Activated T-helper 2 cell treated with anti-CD3 and anti-CD28 coated beads, Interferon-gamma antibody, Interleukin-2, Interleukin-4, amounts not matched to agents 10 μg/mL and 5 μg/mL and 100 μg/mL, durations not matched to agents 14 hours and 24 hours and 36 hours (primary cell): ENCODE measurements at regions of chrX and their contacts with region 1.

Region 1: DNA sequence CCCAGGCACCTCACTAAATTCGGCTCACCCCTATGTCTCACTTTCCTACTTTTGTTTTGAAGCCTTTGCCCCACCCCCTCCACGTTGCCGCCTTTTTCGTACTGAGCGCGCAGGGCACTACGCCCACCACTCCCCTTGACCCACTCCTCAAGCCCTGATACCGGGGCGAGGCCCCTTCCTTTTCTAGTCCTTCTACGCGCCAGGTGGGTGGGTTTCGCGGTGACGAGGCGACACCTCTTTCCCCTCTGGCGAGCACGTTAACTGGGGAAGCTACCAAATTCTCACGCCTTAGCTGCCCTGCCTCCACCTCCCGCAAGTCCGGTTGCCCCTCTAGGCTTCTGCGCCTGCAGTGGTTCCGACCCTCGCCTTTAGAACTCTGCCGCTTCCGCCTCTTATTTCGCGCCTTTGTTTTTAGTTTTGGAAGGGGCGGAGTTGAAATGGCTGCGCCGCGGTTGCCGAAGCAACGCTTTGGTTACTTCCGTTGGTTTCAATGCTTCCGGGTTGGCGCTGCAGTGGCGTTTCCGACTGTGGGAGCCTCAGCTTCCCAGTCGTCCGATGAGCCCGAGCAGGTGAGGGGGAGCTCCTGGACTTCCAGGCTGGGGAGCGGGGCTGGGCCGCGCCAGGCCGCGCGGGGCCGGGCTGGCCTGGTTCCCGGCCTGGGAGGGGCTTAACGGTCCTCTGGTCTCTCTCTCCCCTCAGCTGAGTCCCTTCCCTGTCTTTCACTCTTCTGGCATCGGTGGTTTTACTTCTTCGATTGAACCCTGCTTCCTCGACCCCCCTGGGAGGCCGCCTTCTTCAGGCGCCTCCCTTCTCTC is at the start of gene SLC25A14:
- DNase-seq: peak; percentile 70
- H3K4me3 Mint-ChIP-seq: peak within 1 kb of the TSS; percentile 94
- H3K27ac Mint-ChIP-seq: peak within 1 kb of the TSS; percentile 96
- H3K4me1 Mint-ChIP-seq: peaks cover 18% of the 10 kb centered on the region
- H3K27me3 Mint-ChIP-seq: no peaks in the 10 kb centered on the region
- total RNA-seq, gene SLC25A14: 10.5 TPM in 2 replicates

Region 2: GRCh38 chrX:130211415-130212186 is 128.0 kb before region 1 on chrX:
- intact Hi-C with region 1: loop called (anchors 5 kb)
- DNase-seq: no peak
- H3K4me3 Mint-ChIP-seq: peak overlapping the region; percentile 62
- H3K27ac Mint-ChIP-seq: peak overlapping the region; percentile 90
- H3K4me1 Mint-ChIP-seq: peaks cover 26% of the 10 kb centered on the region
- H3K27me3 Mint-ChIP-seq: no peaks in the 10 kb centered on the region

Region 3: DNA sequence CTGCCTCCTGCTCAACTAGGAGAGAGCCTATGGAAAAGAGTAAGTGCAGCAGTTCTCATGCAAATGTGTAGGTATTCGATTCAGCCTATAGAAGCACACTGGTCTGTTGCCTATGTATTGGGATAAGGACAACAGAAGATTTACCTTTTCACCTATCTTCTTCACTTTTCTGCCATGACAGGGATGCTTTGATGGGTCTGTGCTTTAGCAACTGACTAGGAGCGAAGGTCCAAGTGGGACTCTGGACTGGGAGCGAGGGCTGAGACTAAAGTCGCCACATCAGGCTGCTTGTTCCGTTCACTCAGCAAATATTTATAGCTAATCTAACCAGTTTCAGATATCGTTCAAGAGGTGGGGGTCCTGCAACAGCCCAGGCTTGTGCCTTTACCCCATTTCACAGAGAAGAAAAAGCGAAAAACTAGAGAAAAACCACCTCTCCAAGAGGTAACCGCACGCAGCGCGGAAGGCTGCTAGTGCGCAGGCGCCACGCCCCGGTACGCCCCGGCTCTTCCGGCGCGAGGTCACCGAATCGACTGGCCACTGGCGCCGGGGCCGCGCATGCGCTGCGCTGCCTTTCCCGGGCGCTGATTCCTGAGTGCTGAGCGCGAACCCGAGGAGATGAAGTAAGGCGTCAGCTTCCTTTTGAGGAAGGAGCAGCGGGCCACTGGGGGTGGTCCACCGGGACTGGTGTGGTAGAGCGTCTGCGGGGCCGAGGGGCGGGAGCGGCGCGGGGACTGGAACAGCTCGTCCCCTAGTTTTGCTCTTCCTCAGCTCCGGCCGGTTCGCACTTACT is 62.0 kb after region 1 on chrX and contains the start of gene RBMX2:
- intact Hi-C with region 1: loop called (anchors 5 kb)
- DNase-seq: peak; percentile 65
- H3K4me3 Mint-ChIP-seq: peak within 1 kb of the TSS; percentile 94
- H3K27ac Mint-ChIP-seq: peak within 1 kb of the TSS; percentile 81
- H3K4me1 Mint-ChIP-seq: peaks cover 7% of the 10 kb centered on the region
- H3K27me3 Mint-ChIP-seq: peaks cover 10% of the 10 kb centered on the region
- total RNA-seq, gene RBMX2: 23.8 and 24.4 TPM in 2 replicates

Region 4: GRCh38 chrX:130902783-130903613 is 563.4 kb after region 1 on chrX and contains the start of gene ENOX2:
- intact Hi-C with region 1: loop called (anchors 1 kb)
- DNase-seq: peak; percentile 82
- H3K4me3 Mint-ChIP-seq: no peak within 1 kb of the TSS
- H3K27ac Mint-ChIP-seq: peak within 1 kb of the TSS; percentile 80
- H3K4me1 Mint-ChIP-seq: peaks cover 8% of the 10 kb centered on the region
- H3K27me3 Mint-ChIP-seq: peaks cover 3% of the 10 kb centered on the region
- total RNA-seq, gene ENOX2: 17.7 and 17.8 TPM in 2 replicates